ENCODE measurements at regions of chr10 and their contacts with region 1.

Region 1: DNA sequence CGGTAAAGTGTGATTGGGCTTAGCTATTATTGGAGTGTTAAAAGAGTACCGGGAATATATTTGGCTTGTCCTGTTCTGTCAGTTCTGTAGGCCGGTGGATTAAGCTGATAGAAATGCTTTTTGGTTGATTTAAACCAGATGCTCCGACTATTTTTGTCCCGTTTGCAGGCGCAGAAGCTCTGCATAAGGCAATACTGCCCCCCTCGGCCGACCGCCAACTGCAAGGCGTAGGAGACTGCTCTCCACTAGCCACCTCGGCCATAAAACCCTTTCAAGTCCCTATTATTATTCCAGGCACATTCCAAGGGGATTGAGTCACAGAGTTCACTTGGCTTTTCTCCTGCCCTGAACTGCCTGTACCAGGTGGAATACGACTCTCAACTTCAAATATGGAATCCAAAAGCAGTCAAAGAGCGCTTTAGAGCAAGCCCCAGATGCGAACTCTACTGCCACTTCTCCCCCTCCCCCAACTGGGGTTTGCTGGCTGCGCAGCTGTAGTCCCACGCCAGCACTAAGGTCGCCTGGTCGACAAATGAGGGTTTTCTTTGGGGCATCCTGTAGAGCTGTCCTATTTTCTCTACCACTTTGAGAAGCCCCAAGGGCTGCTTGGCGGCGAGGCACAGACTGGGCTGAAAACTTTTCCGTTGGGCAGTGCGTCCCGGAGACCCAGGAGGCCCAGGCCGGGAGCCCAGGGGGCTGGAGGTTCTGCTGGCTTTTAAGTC is 108.3 kb downstream of the REEP3 start:
- DNase-seq: peak; percentile 98
- H3K4me3 ChIP-seq: peak overlapping the region; percentile 63 to 76 (median 69)
- H3K27ac ChIP-seq: peak overlapping the region; percentile 95 to 99 (median 96)
- H3K4me1 ChIP-seq: peaks cover 29 to 37% (median 35%) of the 10 kb centered on the region in 4 donors
- H3K27me3 ChIP-seq: no peaks in the 10 kb centered on the region
- CTCF ChIP-seq: peak; percentile 67 to 75 (median 69)
- EP300 ChIP-seq: peak; percentile 53
- POLR2A ChIP-seq: no peak

Region 2: GRCh38 chr10:63166742-63167258 is 462.7 kb before region 1 on chr10:
- intact Hi-C with region 1: loop called (anchors 5 kb)
- DNase-seq: no peak
- H3K4me3 ChIP-seq: no peak overlapping the region
- H3K27ac ChIP-seq: peak overlapping the region in 2 of 4 donors; percentile 12 to 46
- H3K4me1 ChIP-seq: peaks cover 15 to 53% (median 50%) of the 10 kb centered on the region in 4 donors
- H3K27me3 ChIP-seq: no peaks in the 10 kb centered on the region
- CTCF ChIP-seq: peak; percentile 83 to 88 (median 86)
- EP300 ChIP-seq: no peak
- POLR2A ChIP-seq: no peak

Region 3: DNA sequence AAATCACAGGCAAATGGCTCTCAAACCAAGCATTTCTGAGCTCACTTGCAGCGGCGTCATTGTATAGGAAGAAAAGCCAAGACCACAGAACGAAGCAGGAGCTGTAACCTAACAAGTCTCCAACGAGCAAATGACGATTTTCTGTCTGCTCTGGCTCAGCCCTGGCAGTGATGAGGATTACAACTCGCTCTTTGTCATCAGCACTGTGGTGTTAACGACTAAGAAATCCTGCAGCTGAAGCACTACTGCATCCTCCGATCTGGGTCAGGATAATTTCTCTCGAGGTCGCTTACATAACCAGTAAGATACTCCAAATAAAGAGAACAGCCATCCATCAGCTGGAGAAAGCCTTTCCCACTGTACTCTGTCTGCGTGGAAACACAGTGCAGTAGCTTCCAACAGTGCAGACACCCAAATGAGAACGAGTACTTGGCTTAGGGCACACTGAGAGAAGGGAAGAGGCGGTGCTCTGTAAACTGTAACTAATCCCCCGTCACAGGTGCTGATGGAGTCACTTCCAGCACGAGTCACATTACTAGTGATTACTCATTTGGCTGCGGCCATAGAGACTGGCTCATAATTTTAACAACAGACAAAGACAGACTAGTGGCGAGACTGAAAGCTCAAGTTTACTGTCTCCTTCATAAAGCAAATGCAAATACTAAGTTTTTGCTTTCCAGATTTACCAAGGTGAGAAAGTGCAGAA is 360.6 kb before region 1 on chr10:
- intact Hi-C with region 1: loop called (anchors 2 kb)
- DNase-seq: peak; percentile 97
- H3K4me3 ChIP-seq: peak overlapping the region; percentile 46 to 61 (median 58)
- H3K27ac ChIP-seq: peak overlapping the region; percentile 81 to 88 (median 86)
- H3K4me1 ChIP-seq: peaks cover 24 to 37% (median 26%) of the 10 kb centered on the region in 4 donors
- H3K27me3 ChIP-seq: no peaks in the 10 kb centered on the region
- CTCF ChIP-seq: peak; percentile 32 to 44 (median 43)
- EP300 ChIP-seq: no peak
- POLR2A ChIP-seq: peak; percentile 70

Region 4: GRCh38 chr10:63355682-63356081 is 273.8 kb before region 1 on chr10:
- intact Hi-C with region 1: no loop called
- DNase-seq: no peak
- H3K4me3 ChIP-seq: no peak overlapping the region
- H3K27ac ChIP-seq: no peak overlapping the region
- H3K4me1 ChIP-seq: peaks cover 0 to 11% (median 7%) of the 10 kb centered on the region in 4 donors
- H3K27me3 ChIP-seq: no peaks in the 10 kb centered on the region
- CTCF ChIP-seq: no peak
- EP300 ChIP-seq: no peak
- POLR2A ChIP-seq: no peak

Region 5: DNA sequence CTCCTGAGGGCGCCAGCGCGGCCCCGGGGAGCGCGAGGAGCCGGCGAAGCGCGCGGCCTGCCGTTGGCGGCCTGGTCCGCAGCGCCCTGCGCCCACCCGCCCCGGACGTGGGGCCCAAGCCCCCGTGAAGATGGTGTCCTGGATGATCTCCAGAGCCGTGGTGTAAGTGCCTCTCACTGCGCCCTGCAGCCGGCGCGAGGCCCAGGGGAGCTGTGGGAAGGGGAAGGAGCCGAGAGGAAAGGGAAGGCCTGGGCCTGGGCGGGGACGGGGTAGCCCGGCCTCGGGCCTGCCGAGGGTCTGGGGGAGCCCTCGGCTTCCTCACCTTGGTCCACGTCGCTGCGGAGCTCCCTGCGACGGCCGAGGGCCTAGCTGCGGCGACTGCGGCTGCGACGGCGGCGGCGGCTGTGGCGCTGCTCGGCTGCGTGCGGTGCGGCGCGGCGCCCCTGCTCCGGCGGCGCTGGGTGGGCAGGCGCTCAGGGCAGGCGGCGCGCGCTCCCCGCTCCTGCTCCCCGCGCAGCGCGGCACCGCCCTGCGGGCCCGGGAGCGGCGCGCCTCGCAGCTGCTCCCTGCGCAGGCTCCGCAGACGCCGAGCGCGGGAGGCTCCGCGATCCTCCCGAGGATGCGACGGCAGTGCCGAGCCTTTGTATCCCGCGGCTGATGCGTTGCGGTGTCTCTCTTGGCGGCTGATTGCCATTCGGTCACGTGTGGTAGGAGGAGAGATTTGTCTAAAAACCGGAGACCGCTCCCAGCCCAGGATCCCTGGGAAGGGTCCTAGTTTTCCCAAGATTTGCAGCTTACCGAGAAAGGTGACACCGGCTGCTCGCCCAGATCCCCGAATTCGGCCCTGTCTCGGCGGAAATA is 107.9 kb before region 1 on chr10:
- intact Hi-C with region 1: loop called (anchors 5 kb)
- DNase-seq: no peak
- H3K4me3 ChIP-seq: peak overlapping the region; percentile 81 to 91 (median 88)
- H3K27ac ChIP-seq: peak overlapping the region; percentile 99 to 100 (median 99)
- H3K4me1 ChIP-seq: peaks cover 42 to 74% (median 71%) of the 10 kb centered on the region in 4 donors
- H3K27me3 ChIP-seq: no peaks in the 10 kb centered on the region
- CTCF ChIP-seq: peak in 1 of 3 experiments; percentile 5
- EP300 ChIP-seq: no peak
- POLR2A ChIP-seq: no peak

Region 6: DNA sequence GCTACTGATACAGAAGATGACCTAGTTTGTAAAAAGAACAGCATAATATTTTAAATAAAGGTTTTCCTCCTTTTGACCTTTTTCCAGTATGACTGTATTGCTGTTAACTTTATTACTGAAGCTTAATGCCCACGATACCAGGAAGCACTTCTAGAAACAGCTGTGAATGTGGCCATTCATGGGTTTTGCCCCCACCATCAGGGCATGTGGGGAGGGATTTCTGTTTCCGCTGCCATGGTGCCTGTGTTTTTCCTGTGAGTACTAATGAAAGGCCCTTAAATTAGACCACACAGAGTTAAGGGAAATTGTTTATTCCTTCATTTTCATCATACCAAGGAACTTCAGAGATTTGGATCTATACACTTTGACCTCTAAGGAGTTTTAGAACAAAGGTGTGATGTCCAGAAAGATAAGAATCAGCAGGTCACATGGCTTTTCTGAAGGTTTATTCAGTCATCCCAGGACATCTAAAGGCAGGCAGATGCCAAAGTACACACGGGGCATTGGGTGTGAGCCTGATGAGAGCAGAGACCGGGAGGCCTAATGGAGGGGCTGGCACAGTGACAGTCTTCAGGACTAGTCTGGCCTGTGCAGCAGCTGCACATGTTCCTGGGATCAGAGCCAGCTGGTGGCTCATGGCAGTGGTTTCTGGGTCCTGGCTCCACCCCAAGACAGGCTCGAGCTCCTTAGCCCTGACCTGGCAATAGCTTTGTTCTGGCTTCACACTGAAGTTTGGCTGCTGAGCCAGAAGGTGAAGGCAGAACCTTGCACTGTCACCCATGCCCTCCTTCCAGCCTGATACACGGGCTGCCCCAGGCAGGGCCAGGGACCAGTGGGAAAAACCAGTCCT is 82.6 kb after region 1 on chr10:
- intact Hi-C with region 1: loop called (anchors 2 kb)
- DNase-seq: peak; percentile 96
- H3K4me3 ChIP-seq: peak overlapping the region in 1 of 4 donors; percentile 3
- H3K27ac ChIP-seq: peak overlapping the region; percentile 80 to 89 (median 84)
- H3K4me1 ChIP-seq: peaks cover 49 to 54% (median 51%) of the 10 kb centered on the region in 4 donors
- H3K27me3 ChIP-seq: no peaks in the 10 kb centered on the region
- CTCF ChIP-seq: no peak
- EP300 ChIP-seq: no peak
- POLR2A ChIP-seq: no peak

Measured in esophagus muscularis mucosa (tissue), 4 donors.